ENCODE measurements at regions of chr6 and their contacts with region 1.

Region 1: GRCh38 chr6:167093922-167094432 is 28.9 kb upstream of the CCR6 start:
- DNase-seq: peak; percentile 90
- ATAC-seq: peak; percentile 66
- H3K4me3 ChIP-seq: peak overlapping the region; percentile 70
- H3K27ac ChIP-seq: peak overlapping the region; percentile 99
- H3K4me1 ChIP-seq: peaks cover 74% of the 10 kb centered on the region
- H3K27me3 ChIP-seq: no peaks in the 10 kb centered on the region
- CTCF ChIP-seq: no peak
- EP300 ChIP-seq: peak; percentile 39 to 66; a peak in 2 of 4 replicates
- POLR2A ChIP-seq: peak; percentile 88
- RAD21 ChIP-seq: no peak

Region 2: DNA sequence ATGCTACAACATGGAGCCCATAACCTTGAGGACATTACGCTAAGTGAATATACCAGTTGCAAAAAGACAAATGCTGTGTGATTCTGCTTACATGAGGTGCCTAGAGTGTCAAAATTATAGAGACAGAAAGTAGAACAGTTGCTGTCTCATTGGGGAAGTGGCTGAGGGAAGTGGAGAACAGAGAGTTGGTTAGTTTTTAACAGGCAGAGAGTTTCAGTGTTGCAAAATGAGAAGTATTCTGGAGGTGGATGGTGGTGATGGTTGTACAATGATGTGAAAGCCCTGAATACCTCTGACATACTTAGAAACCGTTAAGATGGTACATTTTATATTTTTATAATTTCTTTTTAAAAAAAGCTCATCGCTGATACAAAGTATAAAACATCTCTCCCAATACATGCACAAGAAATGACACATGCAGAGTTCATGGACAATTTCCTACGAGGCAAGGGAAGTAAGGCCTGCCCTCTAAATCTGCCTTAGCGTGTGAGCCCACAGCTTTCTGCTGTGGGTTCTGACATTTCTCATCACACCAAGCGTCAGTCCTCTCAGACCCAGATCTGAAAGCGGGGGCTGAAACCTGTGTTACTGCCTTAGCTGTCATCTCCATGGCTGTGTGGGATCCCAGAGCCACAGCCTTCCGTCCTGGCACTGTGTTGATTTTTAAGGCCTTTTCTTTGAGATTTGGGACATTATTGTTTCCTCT is 263.6 kb before region 1 on chr6:
- CTCF ChIA-PET with region 1: no interaction called
- POLR2A ChIA-PET with region 1: no interaction called
- RAD21 ChIA-PET with region 1: no interaction called
- SMC1A ChIA-PET with region 1: interaction called, 5 read pairs
- in situ Hi-C with region 1: no loop called
- intact Hi-C with region 1: loop called (anchors 5 kb)
- DNase-seq: peak; percentile 80
- ATAC-seq: peak; percentile 94
- H3K4me3 ChIP-seq: peak overlapping the region; percentile 3; the same call in 1 of the 2 replicates
- H3K27ac ChIP-seq: peak overlapping the region; percentile 99
- H3K4me1 ChIP-seq: peaks cover 19% of the 10 kb centered on the region
- H3K27me3 ChIP-seq: no peaks in the 10 kb centered on the region
- CTCF ChIP-seq: no peak
- EP300 ChIP-seq: peak; percentile 28 to 35; a peak in 2 of 4 replicates
- POLR2A ChIP-seq: no peak; the same call in 1 of the 2 replicates
- RAD21 ChIP-seq: no peak

Region 3: DNA sequence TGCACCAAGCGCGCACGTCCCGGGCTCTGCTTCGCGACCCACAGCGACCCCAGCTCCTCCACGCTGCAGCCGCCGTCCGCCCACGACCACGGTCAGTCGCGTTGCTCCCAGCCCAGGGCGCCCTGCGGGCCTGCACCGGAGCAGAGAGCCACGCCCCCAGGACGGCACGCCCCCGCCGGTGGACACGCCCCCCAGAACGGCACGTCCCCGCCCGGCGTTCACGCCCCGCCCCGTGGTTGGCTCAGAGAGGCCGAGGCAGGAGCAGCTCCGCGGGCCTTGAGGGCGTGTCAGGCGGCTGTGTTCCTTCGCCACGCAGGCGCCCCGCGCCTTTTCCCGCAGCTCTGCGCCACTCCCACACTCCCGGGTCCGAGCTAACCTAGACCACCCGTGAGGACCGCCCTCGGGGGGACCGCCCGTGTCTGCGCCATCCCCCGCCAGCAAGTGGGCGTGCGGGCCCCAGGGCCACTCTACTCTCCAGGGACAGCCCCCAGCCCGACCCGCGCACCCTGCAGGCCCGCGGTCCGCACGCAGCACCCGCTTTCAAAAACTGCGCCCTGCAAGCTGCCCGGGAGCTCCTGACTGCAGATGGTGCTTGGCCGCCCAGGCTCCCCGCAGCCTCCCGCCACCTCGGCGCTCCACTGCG is 137.4 kb before region 1 on chr6 and contains the start of gene RNASET2:
- CTCF ChIA-PET with region 1: interaction called, 3 read pairs
- POLR2A ChIA-PET with region 1: interaction called, 9 read pairs
- RAD21 ChIA-PET with region 1: interaction called, 24 read pairs
- SMC1A ChIA-PET with region 1: interaction called, 10 read pairs
- in situ Hi-C with region 1: no loop called
- intact Hi-C with region 1: loop called (anchors 2 kb)
- DNase-seq: no peak
- ATAC-seq: peak; percentile 83
- H3K4me3 ChIP-seq: peak within 1 kb of the TSS; percentile 94
- H3K27ac ChIP-seq: peak within 1 kb of the TSS; percentile 94
- H3K4me1 ChIP-seq: peaks cover 49% of the 10 kb centered on the region
- H3K27me3 ChIP-seq: no peaks in the 10 kb centered on the region
- CTCF ChIP-seq: no peak
- EP300 ChIP-seq: no peak
- POLR2A ChIP-seq: peak; percentile 91
- RAD21 ChIP-seq: no peak
- polyA plus RNA-seq, gene RNASET2: 5.5 to 17.8 TPM

Region 4: DNA sequence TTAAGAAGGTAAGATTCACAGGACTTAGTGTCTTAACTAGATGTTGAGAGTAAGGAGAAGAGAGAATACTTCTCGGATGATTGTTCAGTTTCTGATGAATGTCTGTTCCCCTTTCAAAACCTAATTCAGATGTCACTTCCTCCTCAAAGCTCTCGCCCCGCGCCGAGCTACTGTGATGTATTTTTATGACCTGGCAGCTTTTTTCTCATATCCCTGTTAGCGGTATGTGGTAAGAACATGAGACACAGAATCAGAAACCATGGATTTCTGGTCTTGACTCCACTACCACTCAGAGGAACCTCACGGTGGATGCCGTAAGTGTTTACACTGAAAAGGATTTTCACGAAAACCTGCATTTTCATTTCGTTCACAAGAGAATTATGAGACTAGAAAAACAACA is 46.4 kb before region 1 on chr6:
- CTCF ChIA-PET with region 1: interaction called, 20 read pairs
- POLR2A ChIA-PET with region 1: interaction called, 22 read pairs
- RAD21 ChIA-PET with region 1: interaction called, 41 read pairs
- SMC1A ChIA-PET with region 1: interaction called, 84 read pairs
- in situ Hi-C with region 1: no loop called
- intact Hi-C with region 1: loop called (anchors 1 kb)
- DNase-seq: peak; percentile 86
- ATAC-seq: peak; percentile 87
- H3K4me3 ChIP-seq: peak overlapping the region; percentile 36; the same call in 1 of the 2 replicates
- H3K27ac ChIP-seq: peak overlapping the region; percentile 89
- H3K4me1 ChIP-seq: peaks cover 36% of the 10 kb centered on the region
- H3K27me3 ChIP-seq: no peaks in the 10 kb centered on the region
- CTCF ChIP-seq: no peak
- EP300 ChIP-seq: peak; percentile 74 to 77; a peak in 3 of 4 replicates
- POLR2A ChIP-seq: no peak
- RAD21 ChIP-seq: no peak

Region 5: GRCh38 chr6:167079853-167080297 is 14.1 kb before region 1 on chr6:
- CTCF ChIA-PET with region 1: interaction called, 10 read pairs
- POLR2A ChIA-PET with region 1: interaction called, 6 read pairs
- RAD21 ChIA-PET with region 1: interaction called, 7 read pairs
- SMC1A ChIA-PET with region 1: interaction called, 23 read pairs
- in situ Hi-C with region 1: no loop called
- intact Hi-C with region 1: no loop called
- DNase-seq: peak; percentile 93
- ATAC-seq: peak; percentile 99
- H3K4me3 ChIP-seq: no peak overlapping the region
- H3K27ac ChIP-seq: peak overlapping the region; percentile 79
- H3K4me1 ChIP-seq: peaks cover 31% of the 10 kb centered on the region
- H3K27me3 ChIP-seq: no peaks in the 10 kb centered on the region
- CTCF ChIP-seq: peak; percentile 70 to 81 (median 74)
- EP300 ChIP-seq: peak; percentile 64 to 84; a peak in 2 of 4 replicates
- POLR2A ChIP-seq: no peak
- RAD21 ChIP-seq: peak; percentile 83

Region 6: DNA sequence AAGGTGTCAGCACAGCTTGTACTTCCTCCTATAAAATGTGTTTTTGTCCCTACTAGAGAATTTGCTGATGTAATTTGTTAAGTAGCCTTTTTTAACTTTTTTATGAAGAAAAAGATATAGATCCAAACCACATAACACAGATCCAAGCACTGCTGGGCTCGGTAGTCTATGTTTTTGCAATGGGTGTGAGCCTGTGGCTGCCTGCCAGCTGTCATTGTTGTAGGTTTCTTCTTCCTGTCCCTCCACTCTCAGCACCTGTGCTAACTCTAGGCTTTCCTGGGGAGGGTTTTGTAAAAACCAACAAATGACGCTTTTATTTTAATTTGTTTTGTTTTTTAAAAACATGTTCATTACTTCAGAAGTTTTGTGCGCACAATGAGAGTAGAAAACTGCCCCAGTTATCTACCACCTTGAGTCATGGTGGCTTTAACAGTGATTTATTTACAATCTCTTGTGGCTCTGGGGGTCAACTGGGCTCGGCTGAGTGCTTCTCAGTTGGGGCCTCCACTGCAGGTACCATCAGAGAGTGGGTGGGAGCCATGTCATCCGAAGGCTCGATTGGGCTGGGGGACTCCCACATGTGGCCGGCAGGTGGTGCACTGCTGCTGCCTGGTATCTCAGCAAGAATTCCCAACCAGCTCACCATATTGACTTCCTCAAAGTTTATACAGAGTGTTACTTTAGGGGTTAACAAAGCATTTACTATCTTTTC is 25.8 kb after region 1 on chr6:
- CTCF ChIA-PET with region 1: interaction called, 129 read pairs
- POLR2A ChIA-PET with region 1: interaction called, 279 read pairs
- RAD21 ChIA-PET with region 1: interaction called, 231 read pairs
- SMC1A ChIA-PET with region 1: interaction called, 542 read pairs
- in situ Hi-C with region 1: no loop called
- intact Hi-C with region 1: loop called (anchors 2 kb)
- DNase-seq: no peak
- ATAC-seq: no peak
- H3K4me3 ChIP-seq: no peak overlapping the region
- H3K27ac ChIP-seq: peak overlapping the region; percentile 66; the same call in 1 of the 2 replicates
- H3K4me1 ChIP-seq: peaks cover 69% of the 10 kb centered on the region
- H3K27me3 ChIP-seq: no peaks in the 10 kb centered on the region
- CTCF ChIP-seq: peak; percentile 18 to 58 (median 56); a peak in 5 of 6 replicates
- EP300 ChIP-seq: no peak
- POLR2A ChIP-seq: no peak
- RAD21 ChIP-seq: peak; percentile 30

Region 7: GRCh38 chr6:167153521-167153959 is 59.6 kb after region 1 on chr6:
- CTCF ChIA-PET with region 1: interaction called, 4 read pairs
- POLR2A ChIA-PET with region 1: interaction called, 13 read pairs
- RAD21 ChIA-PET with region 1: interaction called, 5 read pairs
- SMC1A ChIA-PET with region 1: interaction called, 4 read pairs
- in situ Hi-C with region 1: no loop called
- intact Hi-C with region 1: loop called (anchors 1 kb)
- DNase-seq: peak; percentile 78
- ATAC-seq: peak; percentile 71
- H3K4me3 ChIP-seq: peak overlapping the region; percentile 54
- H3K27ac ChIP-seq: peak overlapping the region; percentile 70
- H3K4me1 ChIP-seq: peaks cover 30% of the 10 kb centered on the region
- H3K27me3 ChIP-seq: no peaks in the 10 kb centered on the region; a peak in 1 of 4 replicates
- CTCF ChIP-seq: no peak
- EP300 ChIP-seq: peak; percentile 81; a peak in 3 of 4 replicates
- POLR2A ChIP-seq: no peak
- RAD21 ChIP-seq: no peak

Region 8: DNA sequence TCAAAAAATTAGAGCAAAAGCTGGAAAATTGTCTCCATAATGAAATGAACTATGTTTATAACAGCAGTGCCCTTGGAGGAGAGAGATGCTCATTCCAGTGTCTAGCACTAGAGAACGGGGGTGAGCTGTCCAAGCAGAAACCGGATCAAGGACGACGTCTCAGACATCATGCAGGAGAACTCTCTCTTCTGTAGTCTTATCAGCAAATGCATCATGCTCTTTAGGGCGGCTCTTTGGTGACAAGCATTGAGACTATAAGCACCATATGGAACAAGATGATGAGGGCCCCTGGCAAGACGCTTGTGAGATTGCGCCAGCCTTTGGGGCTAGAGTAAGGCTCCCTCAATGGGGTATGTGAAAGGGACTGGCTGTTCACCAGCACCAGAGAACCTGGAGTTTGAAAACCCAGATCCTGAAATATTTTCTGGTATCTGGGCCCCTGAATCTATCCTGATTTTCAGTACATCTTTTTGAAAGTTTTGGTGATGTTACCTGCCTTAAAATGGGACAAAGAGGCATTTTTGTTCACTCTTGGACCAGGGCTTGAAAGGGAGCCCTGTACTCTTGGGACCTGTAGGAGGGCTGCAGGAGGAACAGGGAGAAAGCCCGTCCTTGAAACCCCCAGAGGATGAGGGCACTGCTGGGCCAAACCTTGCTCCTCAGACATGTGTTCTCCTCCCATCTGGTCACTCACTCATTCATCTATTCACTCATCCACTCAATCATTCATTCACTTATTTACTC is 358.5 kb after region 1 on chr6:
- CTCF ChIA-PET with region 1: no interaction called
- POLR2A ChIA-PET with region 1: no interaction called
- RAD21 ChIA-PET with region 1: no interaction called
- SMC1A ChIA-PET with region 1: no interaction called
- in situ Hi-C with region 1: no loop called
- intact Hi-C with region 1: no loop called
- DNase-seq: no peak
- ATAC-seq: no peak; the same call in 2 of the 3 replicates
- H3K4me3 ChIP-seq: no peak overlapping the region
- H3K27ac ChIP-seq: no peak overlapping the region
- H3K4me1 ChIP-seq: no peaks in the 10 kb centered on the region
- H3K27me3 ChIP-seq: no peaks in the 10 kb centered on the region; a peak in 1 of 4 replicates
- CTCF ChIP-seq: no peak
- EP300 ChIP-seq: no peak
- POLR2A ChIP-seq: no peak
- RAD21 ChIP-seq: no peak